Activated CD4-positive, alpha-beta memory T cell treated with anti-CD3 and anti-CD28 coated beads, Interleukin-2, amount 10 ng/mL, durations not matched to agents 7 days and 5 days (primary cell): ENCODE measurements at regions of chr17 and their contacts with region 1.

Region 1: GRCh38 chr17:41966463-41967140 is at the start of gene CNP:
- DNase-seq: peak; percentile 93
- H3K4me3 Mint-ChIP-seq: peak within 1 kb of the TSS; percentile 81
- H3K27ac Mint-ChIP-seq: peak within 1 kb of the TSS; percentile 84
- H3K4me1 Mint-ChIP-seq: peaks cover 50% of the 10 kb centered on the region
- H3K27me3 Mint-ChIP-seq: no peaks in the 10 kb centered on the region
- total RNA-seq, gene CNP: 89.8 to 91.0 TPM

Region 2: GRCh38 chr17:41864836-41865595 is 101.6 kb before region 1 on chr17 and contains the start of gene KLHL11:
- CTCF ChIA-PET with region 1: no interaction called
- POLR2A ChIA-PET with region 1: interaction called, 21 read pairs
- DNase-seq: peak; percentile 91
- H3K4me3 Mint-ChIP-seq: no peak within 1 kb of the TSS
- H3K27ac Mint-ChIP-seq: no peak within 1 kb of the TSS
- H3K4me1 Mint-ChIP-seq: peaks cover 49% of the 10 kb centered on the region
- H3K27me3 Mint-ChIP-seq: no peaks in the 10 kb centered on the region
- total RNA-seq, gene KLHL11: 13.9 to 14.4 TPM

Region 3: GRCh38 chr17:41930009-41930832 is 36.4 kb before region 1 on chr17 and contains the start of gene ODAD4:
- CTCF ChIA-PET with region 1: interaction called, 11 read pairs
- POLR2A ChIA-PET with region 1: interaction called, 40 read pairs
- DNase-seq: peak; percentile 97
- H3K4me3 Mint-ChIP-seq: peak within 1 kb of the TSS; percentile 95
- H3K27ac Mint-ChIP-seq: peak within 1 kb of the TSS; percentile 96
- H3K4me1 Mint-ChIP-seq: peaks cover 60% of the 10 kb centered on the region
- H3K27me3 Mint-ChIP-seq: no peaks in the 10 kb centered on the region
- total RNA-seq, gene ODAD4: 1.7 to 2.0 TPM